K562 (cell line): ENCODE measurements at regions of chr19 and their contacts with region 1.

Region 1: GRCh38 chr19:34041925-34042521 is 130.3 kb upstream of the LSM14A start:
- DNase-seq: peak; percentile 56 to 72 (median 64)
- ATAC-seq: peak; percentile 88
- H3K4me3 ChIP-seq: no peak overlapping the region
- H3K27ac ChIP-seq: no peak overlapping the region
- H3K4me1 ChIP-seq: no peaks in the 10 kb centered on the region
- H3K27me3 ChIP-seq: peaks cover 0 to 8% of the 10 kb centered on the region in 2 experiments; a peak in 1 of 5 replicates
- CTCF ChIP-seq: peak; percentile 82 to 92 (median 82)
- EP300 ChIP-seq: no peak
- POLR2A ChIP-seq: no peak
- RAD21 ChIP-seq: peak; percentile 29 to 67; a peak in 3 of 4 replicates

Region 2: GRCh38 chr19:34145741-34146202 is 103.7 kb after region 1 on chr19:
- CTCF ChIA-PET with region 1: interaction called, 14 read pairs
- POLR2A ChIA-PET with region 1: no interaction called
- in situ Hi-C with region 1: no loop called
- intact Hi-C with region 1: loop called (anchors 1 kb)
- DNase-seq: peak; percentile 61 to 73 (median 66)
- ATAC-seq: peak; percentile 85
- H3K4me3 ChIP-seq: no peak overlapping the region
- H3K27ac ChIP-seq: no peak overlapping the region
- H3K4me1 ChIP-seq: no peaks in the 10 kb centered on the region
- H3K27me3 ChIP-seq: no peaks in the 10 kb centered on the region; a peak in 2 of 5 replicates
- CTCF ChIP-seq: peak; percentile 84 to 93 (median 86)
- EP300 ChIP-seq: no peak
- POLR2A ChIP-seq: no peak
- RAD21 ChIP-seq: peak; percentile 77 to 91